ENCODE measurements at regions of chr9 and their contacts with region 1.

Region 1: GRCh38 chr9:121992571-121993212 is 100.4 kb downstream of the TTLL11 start:
- DNase-seq: no peak
- H3K4me3 ChIP-seq: no peak overlapping the region
- H3K27ac ChIP-seq: no peak overlapping the region
- H3K4me1 ChIP-seq: no peaks in the 10 kb centered on the region
- H3K27me3 ChIP-seq: no peaks in the 10 kb centered on the region
- CTCF ChIP-seq: peak; percentile 66 to 74 (median 70)
- POLR2A ChIP-seq: no peak

Region 2: DNA sequence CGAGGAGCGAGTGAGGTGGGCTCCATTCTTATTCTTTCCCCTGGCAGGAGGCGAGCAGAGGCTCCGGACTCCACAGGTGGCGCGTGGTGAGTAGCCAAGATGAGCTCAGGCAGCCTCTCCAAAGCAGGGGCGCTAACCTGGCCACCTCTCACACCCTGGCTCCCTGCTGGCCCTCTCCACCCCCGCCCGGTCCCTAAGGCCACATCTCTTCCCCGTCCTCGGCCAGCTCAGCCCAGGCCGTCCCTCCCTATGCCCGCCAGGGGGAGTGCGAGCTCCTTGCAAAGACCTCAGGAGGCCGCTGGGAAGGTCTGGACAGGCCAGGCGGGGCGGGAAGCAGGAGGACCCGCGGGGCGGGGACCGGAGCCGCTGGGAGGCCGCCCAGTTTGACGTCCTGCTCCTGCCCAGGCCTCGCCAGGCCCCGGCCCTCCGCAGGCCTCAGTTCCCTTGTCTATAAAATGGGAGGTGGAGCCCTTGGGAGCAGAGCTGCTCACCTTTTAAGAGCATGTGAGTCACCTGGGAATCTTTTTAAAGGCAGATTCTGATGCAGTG is 446.7 kb before region 1 on chr9:
- intact Hi-C with region 1: loop called (anchors 5 kb)
- DNase-seq: no peak
- H3K4me3 ChIP-seq: no peak overlapping the region
- H3K27ac ChIP-seq: peak overlapping the region; percentile 40
- H3K4me1 ChIP-seq: peaks cover 25% of the 10 kb centered on the region
- H3K27me3 ChIP-seq: no peaks in the 10 kb centered on the region
- CTCF ChIP-seq: peak; percentile 95 to 97 (median 95)
- POLR2A ChIP-seq: no peak

Region 3: DNA sequence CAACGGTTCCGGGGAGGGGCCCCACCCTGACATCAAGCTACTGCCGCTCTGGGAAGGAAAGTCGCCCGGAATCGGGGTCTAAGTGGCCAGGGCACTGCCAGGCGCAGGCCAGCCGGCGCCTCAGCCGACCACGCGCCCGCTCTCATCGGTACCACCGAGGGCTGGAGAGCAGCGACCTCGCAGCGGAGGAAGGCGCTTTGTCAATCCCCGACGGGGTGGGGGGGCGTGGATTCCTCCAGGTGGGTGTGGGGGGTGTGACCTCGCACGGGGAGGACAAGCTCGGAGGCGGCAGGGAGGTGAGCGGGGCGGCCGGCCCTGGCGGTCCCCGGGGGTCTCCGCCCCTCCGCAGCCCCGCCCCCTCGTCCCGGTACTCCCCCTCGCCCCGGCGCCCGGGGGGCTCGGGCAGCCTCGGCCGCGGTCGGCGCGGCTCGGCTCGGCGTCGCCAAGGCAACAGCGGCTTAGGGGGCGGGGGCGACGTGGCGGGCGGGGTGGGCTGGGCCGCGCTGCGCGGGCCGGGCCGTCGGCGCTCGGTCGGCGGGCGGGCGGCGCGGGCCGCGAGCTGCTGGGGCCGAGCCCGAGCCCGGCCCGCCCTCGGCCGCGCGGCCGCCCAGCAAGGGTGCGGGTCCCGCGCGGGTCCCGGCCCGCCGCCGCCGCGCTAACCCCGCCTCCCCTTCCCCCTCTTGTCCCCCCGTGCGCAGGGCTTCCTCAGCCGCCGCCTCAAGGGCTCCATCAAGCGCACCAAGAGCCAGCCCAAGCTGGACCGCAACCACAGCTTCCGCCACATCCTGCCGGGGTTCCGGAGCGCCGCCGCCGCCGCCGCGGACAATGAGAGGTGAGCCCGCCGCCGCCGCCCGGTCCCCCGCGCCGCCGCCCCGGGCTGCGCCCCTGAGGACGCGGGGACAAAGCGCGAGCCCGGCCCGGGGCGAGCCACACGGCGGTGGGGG is 293.8 kb before region 1 on chr9:
- intact Hi-C with region 1: loop called (anchors 5 kb)
- DNase-seq: no peak
- H3K4me3 ChIP-seq: peak overlapping the region; percentile 56 to 86
- H3K27ac ChIP-seq: peak overlapping the region; percentile 79
- H3K4me1 ChIP-seq: peaks cover 50% of the 10 kb centered on the region
- H3K27me3 ChIP-seq: no peaks in the 10 kb centered on the region
- CTCF ChIP-seq: no peak
- POLR2A ChIP-seq: no peak

Region 4: GRCh38 chr9:121750715-121751623 is 241.7 kb before region 1 on chr9:
- intact Hi-C with region 1: loop called (anchors 10 kb)
- DNase-seq: no peak
- H3K4me3 ChIP-seq: no peak overlapping the region
- H3K27ac ChIP-seq: peak overlapping the region; percentile 5
- H3K4me1 ChIP-seq: peaks cover 89% of the 10 kb centered on the region
- H3K27me3 ChIP-seq: no peaks in the 10 kb centered on the region
- CTCF ChIP-seq: no peak
- POLR2A ChIP-seq: no peak